Activated CD8-positive, alpha-beta memory T cell treated with anti-CD3 and anti-CD28 coated beads, Interleukin-2, amount 10 ng/mL, durations not matched to agents 7 days and 5 days (primary cell): ENCODE measurements at regions of chr1 and their contacts with region 1.

Region 1: DNA sequence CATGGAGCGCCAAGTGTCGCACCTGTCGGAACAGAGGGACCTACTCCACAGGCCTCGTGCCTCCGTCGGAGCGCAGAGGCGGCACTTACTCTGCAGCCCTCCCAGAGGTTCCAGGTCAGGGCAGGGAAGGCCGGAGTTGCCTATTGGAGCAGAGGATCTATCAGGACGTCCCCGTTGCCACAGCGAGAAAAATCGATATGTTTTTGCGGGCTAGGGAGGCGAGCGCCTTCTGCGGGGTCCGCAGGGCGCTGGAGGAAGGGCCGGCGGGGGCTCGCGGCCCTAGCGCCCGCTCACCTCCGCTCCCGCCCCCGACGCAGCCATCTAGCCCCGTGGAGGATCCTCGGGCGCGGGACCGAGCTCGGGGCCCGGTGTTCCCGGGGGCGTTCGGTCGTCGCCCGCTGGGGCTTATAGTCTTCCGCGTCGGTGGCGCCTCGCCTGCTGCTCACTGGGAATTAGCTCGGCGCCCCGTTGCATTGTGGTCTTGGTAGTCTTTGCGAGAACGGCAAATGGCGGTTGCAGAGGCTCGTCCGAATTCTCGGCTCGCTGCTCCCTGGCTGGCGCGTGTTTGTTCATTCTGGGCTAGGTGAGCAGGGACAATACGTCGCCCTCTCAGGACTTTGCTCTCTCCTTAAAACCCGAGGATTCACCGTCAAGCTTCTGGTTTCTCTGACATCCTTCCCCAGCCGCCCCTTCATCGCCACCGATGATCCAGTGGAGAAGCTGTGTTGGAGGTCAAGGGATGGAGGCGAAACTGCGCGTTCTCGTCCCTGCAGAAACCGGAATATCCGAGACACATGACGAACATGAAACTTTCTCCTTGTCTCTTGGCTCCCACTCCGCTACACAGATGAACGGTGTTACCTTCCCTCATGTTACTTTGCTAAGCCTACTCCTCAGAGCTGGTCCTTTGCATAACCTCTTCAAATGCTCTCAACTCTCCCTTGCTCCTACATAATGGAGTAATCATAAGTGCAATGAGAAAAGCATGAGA is at the start of gene JTB:
- DNase-seq: peak; percentile 91
- ATAC-seq: peak; percentile 97
- H3K4me3 Mint-ChIP-seq: peak within 1 kb of the TSS; percentile 95
- H3K27ac Mint-ChIP-seq: peak within 1 kb of the TSS; percentile 94
- H3K4me1 Mint-ChIP-seq: peaks cover 41% of the 10 kb centered on the region
- H3K27me3 Mint-ChIP-seq: no peaks in the 10 kb centered on the region
- total RNA-seq, gene JTB: 127 to 156 TPM

Region 2: GRCh38 chr1:153939016-153939415 is 38.5 kb before region 1 on chr1:
- CTCF ChIA-PET with region 1: no interaction called
- DNase-seq: no peak
- ATAC-seq: no peak
- H3K4me3 Mint-ChIP-seq: no peak overlapping the region
- H3K27ac Mint-ChIP-seq: no peak overlapping the region
- H3K4me1 Mint-ChIP-seq: peaks cover 10% of the 10 kb centered on the region
- H3K27me3 Mint-ChIP-seq: no peaks in the 10 kb centered on the region

Region 3: DNA sequence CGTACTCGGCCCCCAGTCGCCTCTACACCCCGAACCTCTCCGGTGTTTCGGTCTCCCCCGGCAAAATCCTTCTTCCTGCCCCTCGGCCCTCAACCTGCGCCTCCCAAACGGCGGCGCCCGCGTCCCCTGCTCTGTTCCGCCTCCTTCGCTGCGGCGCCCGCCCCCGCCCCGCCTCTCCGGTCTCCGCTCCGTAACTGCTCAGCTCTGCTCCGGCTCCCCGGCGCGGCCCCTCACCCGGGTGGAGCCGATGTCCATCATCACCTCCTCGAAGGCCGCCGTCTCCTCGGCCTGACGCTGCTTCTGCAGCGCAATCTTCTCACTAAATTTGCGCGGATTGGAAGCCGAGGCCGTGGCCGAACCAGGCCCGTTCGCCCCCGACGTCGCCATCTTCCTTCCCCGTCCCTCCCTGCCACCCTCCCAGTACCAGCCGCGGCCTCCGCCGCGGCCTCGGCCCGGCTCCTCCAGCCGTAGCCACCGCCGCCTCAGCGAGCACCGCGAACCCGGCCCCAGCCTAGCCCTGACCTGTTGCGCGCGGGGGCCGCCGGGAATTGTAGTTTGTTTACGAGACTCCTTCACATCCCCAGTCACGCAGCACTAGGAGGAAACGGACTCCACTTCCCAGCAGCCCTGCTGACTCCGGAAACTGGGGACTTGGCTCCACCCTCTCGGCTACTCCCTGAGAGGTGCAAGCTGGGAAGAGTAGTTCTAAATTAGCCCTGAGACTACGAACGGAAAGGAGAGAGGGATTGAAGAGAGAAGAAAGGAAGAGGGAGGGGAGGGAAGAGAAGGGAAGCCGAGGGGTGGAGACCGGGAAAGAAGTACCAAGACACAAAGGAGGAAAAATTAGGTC is 19.2 kb before region 1 on chr1 and contains the start of gene CRTC2:
- CTCF ChIA-PET with region 1: interaction called, 11 read pairs
- DNase-seq: peak; percentile 100
- ATAC-seq: peak; percentile 87
- H3K4me3 Mint-ChIP-seq: peak within 1 kb of the TSS; percentile 97
- H3K27ac Mint-ChIP-seq: peak within 1 kb of the TSS; percentile 98
- H3K4me1 Mint-ChIP-seq: peaks cover 57% of the 10 kb centered on the region
- H3K27me3 Mint-ChIP-seq: no peaks in the 10 kb centered on the region
- total RNA-seq, gene CRTC2: 86.3 to 98.5 TPM

Region 4: DNA sequence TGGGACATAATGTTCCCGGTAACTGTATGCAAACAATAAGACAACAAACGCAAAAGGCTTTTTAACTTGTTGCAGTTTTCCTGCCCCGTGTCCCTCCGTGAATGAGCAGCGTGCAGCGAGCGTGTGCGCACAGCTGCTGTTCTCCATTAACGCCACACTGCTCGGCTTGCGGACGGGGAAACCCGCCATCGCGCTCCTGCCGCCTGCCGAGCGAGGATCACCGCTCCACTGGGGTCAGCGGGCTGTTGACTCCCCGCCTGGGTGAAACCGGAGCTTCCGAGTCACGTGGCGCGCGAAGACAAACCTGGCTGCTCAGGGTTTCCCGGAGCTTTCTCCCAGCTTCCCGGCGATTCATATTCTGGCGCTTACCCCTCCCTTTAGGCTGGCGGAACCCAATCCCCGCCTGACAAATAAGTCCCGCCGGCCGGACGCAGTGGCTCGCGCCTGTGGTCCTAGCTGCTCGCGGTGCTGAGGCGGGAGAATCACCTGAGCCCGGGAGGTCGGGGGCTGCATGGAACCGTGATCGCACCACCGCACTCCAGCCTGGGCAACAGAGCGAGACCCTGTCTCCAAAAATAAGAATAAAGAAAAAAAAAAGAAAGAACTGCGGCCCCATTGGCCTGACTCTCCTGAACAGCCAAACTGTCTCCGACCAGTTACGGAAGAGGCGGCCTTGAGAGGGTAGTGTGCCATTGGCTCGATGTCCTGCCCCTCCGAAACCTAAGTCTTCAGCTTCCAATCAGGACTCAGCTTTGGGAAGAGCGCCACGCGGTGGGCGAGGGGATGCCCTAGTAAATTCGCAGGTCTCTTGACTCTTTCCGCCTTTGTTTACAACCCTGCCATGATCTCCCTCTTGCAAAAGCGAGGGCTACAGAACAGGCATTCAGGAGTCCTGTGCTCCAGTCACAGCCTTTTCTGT is 10.2 kb before region 1 on chr1 and contains the start of gene CREB3L4:
- CTCF ChIA-PET with region 1: interaction called, 57 read pairs
- DNase-seq: peak; percentile 92
- ATAC-seq: peak; percentile 86
- H3K4me3 Mint-ChIP-seq: peak within 1 kb of the TSS; percentile 97
- H3K27ac Mint-ChIP-seq: peak within 1 kb of the TSS; percentile 96
- H3K4me1 Mint-ChIP-seq: peaks cover 50% of the 10 kb centered on the region
- H3K27me3 Mint-ChIP-seq: no peaks in the 10 kb centered on the region
- total RNA-seq, gene CREB3L4: 6.3 to 8.5 TPM